ENCODE measurements at regions of chr11 and their contacts with region 1.

Region 1: DNA sequence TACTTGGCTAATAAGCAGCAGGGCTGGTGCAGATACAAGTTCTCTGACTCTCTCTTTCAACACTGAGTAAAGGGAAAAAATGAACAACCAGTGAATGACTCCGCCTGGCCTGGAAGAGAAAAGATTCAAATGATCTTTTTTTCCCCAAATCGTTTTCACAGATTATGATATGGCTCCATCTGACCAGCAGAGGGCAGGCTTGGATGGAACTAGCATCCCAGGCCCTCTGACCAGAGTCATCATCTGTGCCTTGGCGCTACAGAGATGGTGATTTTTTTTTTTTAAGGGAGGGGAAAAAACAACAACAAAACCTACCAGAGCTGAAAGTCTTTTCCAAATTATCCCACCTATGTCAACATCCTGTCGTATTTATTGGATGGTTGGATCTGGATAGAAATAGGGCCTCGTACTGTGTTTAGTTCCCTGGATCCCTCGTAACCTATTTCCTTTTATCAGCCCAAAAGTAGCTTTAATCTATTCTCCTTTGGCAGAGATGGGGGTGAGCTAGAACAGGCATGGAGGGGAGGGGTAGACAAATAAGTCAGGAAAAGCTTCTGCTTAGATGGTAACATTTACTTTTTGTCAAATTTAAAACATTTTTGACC is 69.7 kb downstream of the PRSS23 start:
- DNase-seq: peak; percentile 29
- ATAC-seq: peak; percentile 94
- H3K4me3 ChIP-seq: no peak overlapping the region
- H3K27ac ChIP-seq: no peak overlapping the region
- H3K4me1 ChIP-seq: no peaks in the 10 kb centered on the region
- H3K27me3 ChIP-seq: peaks cover 0 to 5% of the 10 kb centered on the region in 2 experiments; a peak in 3 of 5 replicates
- CTCF ChIP-seq: peak; percentile 82
- EP300 ChIP-seq: no peak
- POLR2A ChIP-seq: no peak
- RAD21 ChIP-seq: peak; percentile 46; the same call in 1 of the 2 replicates

Region 2: DNA sequence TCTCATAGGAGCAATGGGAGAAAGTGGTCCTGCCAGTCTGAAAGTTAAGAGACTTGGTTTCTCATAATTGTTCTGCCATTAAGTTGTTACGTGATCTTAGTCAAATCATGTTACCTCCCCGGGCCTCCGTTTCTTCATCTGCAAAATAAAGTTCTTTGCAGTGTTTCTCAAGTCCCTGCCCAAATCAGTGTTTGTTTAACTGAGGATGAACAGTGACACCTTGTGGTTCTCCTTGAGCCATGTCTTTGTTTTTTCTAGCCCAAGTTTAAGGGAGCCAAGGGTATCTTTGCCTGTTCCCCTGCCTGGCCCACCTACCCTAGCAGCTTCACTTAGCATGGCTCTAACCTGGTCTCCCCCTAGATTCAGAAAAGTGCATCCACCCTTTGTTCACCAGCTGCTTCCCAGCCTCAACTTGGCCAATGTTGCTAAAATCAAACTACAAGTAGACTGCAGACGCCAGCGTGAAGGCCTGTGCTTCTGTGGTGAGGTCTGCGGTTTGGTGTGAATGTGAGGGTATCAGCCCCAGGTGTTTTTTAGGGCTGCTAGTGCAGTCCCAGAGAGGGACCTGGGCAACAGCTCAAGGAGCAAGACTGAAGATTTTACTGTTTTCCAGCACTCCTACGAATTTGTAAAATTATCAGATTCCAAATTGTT is 49.6 kb after region 1 on chr11:
- CTCF ChIA-PET with region 1: interaction called, 25 read pairs
- POLR2A ChIA-PET with region 1: no interaction called
- in situ Hi-C with region 1: loop called (anchors 5 kb)
- intact Hi-C with region 1: loop called (anchors 1 kb)
- DNase-seq: peak; percentile 43
- ATAC-seq: peak; percentile 37; the same call in 1 of the 3 replicates
- H3K4me3 ChIP-seq: no peak overlapping the region
- H3K27ac ChIP-seq: no peak overlapping the region
- H3K4me1 ChIP-seq: peaks cover 16% of the 10 kb centered on the region
- H3K27me3 ChIP-seq: no peaks in the 10 kb centered on the region
- CTCF ChIP-seq: peak; percentile 68
- EP300 ChIP-seq: no peak
- POLR2A ChIP-seq: no peak
- RAD21 ChIP-seq: no peak

Region 3: GRCh38 chr11:87421422-87421821 is 551.4 kb after region 1 on chr11:
- CTCF ChIA-PET with region 1: interaction called, 10 read pairs
- POLR2A ChIA-PET with region 1: no interaction called
- in situ Hi-C with region 1: loop called (anchors 5 kb)
- intact Hi-C with region 1: loop called (anchors 1 kb)
- DNase-seq: peak; percentile 67
- ATAC-seq: peak; percentile 97
- H3K4me3 ChIP-seq: no peak overlapping the region
- H3K27ac ChIP-seq: no peak overlapping the region
- H3K4me1 ChIP-seq: no peaks in the 10 kb centered on the region
- H3K27me3 ChIP-seq: peaks cover 0 to 9% of the 10 kb centered on the region in 2 experiments; a peak in 2 of 5 replicates
- CTCF ChIP-seq: peak; percentile 86
- EP300 ChIP-seq: no peak
- POLR2A ChIP-seq: no peak
- RAD21 ChIP-seq: peak; percentile 61